ENCODE measurements at regions of chr6 and their contacts with region 1.

Region 1: DNA sequence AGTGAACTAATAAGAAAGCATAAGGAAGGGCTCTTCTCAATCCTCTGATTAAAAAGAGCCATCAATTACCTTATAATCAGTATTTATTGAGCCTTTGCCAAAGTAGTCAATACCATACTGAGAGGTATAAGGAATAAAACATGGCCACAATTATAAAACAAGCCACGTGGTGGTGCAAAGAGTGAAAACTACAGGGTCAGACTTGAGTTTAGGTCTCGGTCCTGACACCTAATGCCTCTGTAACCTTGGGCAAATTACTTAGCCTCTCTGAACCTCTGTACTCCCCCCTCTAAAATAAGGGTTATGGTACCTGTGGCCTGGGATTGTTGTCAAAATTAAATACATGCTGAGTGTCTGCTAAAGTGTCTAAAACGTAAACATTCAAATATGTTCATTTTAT is 11.8 kb downstream of the TRIM10 start:
- DNase-seq: no peak
- H3K4me3 Mint-ChIP-seq: no peak overlapping the region
- H3K27ac Mint-ChIP-seq: no peak overlapping the region
- H3K4me1 Mint-ChIP-seq: peaks cover 4% of the 10 kb centered on the region
- H3K27me3 Mint-ChIP-seq: peaks cover 28% of the 10 kb centered on the region

Region 2: GRCh38 chr6:30130887-30131862 is 18.1 kb before region 1 on chr6:
- CTCF ChIA-PET with region 1: interaction called, 10 read pairs
- POLR2A ChIA-PET with region 1: no interaction called
- DNase-seq: peak; percentile 82
- H3K4me3 Mint-ChIP-seq: no peak overlapping the region
- H3K27ac Mint-ChIP-seq: no peak overlapping the region
- H3K4me1 Mint-ChIP-seq: peaks cover 17% of the 10 kb centered on the region
- H3K27me3 Mint-ChIP-seq: peaks cover 68% of the 10 kb centered on the region